ENCODE measurements at regions of chr1 and their contacts with region 1.

Region 1: DNA sequence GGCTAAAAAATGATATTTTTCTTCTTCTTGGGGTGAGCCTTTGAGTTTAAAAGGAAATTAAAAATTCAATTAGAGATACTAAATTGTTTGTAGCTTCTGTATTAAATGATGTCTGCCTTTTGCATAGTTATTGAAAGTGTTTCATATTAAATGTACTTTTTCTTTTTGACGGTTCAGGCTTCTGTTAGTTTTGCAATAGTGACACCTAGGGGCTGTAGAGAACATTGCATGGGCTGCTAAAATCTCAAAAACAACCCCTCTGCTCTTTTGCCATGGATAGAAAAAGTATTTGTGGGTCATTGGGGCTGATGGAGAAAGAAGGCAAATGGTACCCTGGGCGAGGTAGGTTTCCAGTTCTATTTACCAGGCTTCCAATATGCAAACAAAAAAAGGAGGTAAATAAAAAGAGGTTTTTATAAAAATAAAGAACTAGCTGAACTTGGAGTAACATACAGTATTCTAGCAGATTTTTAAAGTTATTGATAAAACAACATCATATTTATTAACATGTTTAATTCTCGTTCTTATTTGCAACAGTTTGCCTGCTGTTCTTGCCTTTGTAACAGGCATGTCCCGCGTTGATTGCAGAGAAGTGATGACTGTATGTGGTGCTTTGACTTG is 115.4 kb upstream of the HOOK1 start:
- DNase-seq: peak; percentile 67
- ATAC-seq: peak; percentile 44
- H3K4me3 ChIP-seq: no peak overlapping the region
- H3K4me3 Mint-ChIP-seq: no peak overlapping the region
- H3K27ac ChIP-seq: no peak overlapping the region
- H3K27ac Mint-ChIP-seq: no peak overlapping the region
- H3K4me1 ChIP-seq: peaks cover 24 to 29% of the 10 kb centered on the region in 2 donors
- H3K4me1 Mint-ChIP-seq: peaks cover 26% of the 10 kb centered on the region
- H3K27me3 ChIP-seq: no peaks in the 10 kb centered on the region
- H3K27me3 Mint-ChIP-seq: no peaks in the 10 kb centered on the region
- CTCF ChIP-seq: peak; percentile 97

Region 2: DNA sequence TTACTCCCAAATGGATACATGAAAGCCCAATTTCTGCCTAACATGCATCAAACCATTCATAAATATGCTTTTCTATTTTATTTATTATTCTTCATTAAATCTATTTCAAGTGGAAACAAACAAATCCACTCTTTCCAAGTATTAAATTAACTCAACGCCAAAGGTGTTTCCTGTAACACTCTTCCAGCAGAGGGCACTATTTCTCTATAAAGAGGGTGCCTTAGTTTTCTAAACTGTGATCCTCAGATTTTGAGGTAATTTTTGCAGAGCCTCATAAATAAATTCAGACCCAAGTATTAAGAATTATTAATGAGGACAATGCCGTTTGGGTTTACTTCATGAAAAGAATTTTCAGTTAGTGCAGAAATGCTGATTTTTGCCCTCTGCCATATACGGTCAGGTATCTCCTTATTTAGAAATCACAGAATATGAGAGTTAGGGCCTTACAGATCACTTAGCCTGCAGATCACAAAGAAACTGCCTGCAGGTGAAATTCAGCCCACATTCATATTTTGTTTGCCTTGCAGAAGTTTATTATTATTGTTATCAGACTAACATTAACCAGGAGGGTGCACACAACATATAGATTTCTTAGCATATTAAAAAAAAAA is 959.4 kb before region 1 on chr1:
- CTCF ChIA-PET with region 1: interaction called, 188 read pairs
- POLR2A ChIA-PET with region 1: interaction called, 3 read pairs
- intact Hi-C with region 1: loop called (anchors 1 kb)
- DNase-seq: peak; percentile 75
- ATAC-seq: peak; percentile 61
- H3K4me3 ChIP-seq: no peak overlapping the region
- H3K4me3 Mint-ChIP-seq: no peak overlapping the region
- H3K27ac ChIP-seq: no peak overlapping the region
- H3K27ac Mint-ChIP-seq: no peak overlapping the region
- H3K4me1 ChIP-seq: no peaks in the 10 kb centered on the region
- H3K4me1 Mint-ChIP-seq: no peaks in the 10 kb centered on the region
- H3K27me3 ChIP-seq: no peaks in the 10 kb centered on the region
- H3K27me3 Mint-ChIP-seq: peaks cover 12% of the 10 kb centered on the region
- CTCF ChIP-seq: peak; percentile 98

Region 3: GRCh38 chr1:58903514-58904298 is 795.6 kb before region 1 on chr1:
- CTCF ChIA-PET with region 1: interaction called, 3 read pairs
- POLR2A ChIA-PET with region 1: no interaction called
- intact Hi-C with region 1: loop called (anchors 5 kb)
- DNase-seq: peak; percentile 77
- ATAC-seq: peak; percentile 88
- H3K4me3 ChIP-seq: peak overlapping the region; percentile 45 to 74 (median 60)
- H3K4me3 Mint-ChIP-seq: peak overlapping the region; percentile 85
- H3K27ac ChIP-seq: peak overlapping the region; percentile 49 to 82
- H3K27ac Mint-ChIP-seq: peak overlapping the region; percentile 86
- H3K4me1 ChIP-seq: peaks cover 10% of the 10 kb centered on the region in 2 donors
- H3K4me1 Mint-ChIP-seq: peaks cover 13% of the 10 kb centered on the region
- H3K27me3 ChIP-seq: no peaks in the 10 kb centered on the region
- H3K27me3 Mint-ChIP-seq: no peaks in the 10 kb centered on the region
- CTCF ChIP-seq: no peak

Region 4: GRCh38 chr1:59076612-59077011 is 622.7 kb before region 1 on chr1:
- CTCF ChIA-PET with region 1: interaction called, 11 read pairs
- POLR2A ChIA-PET with region 1: no interaction called
- intact Hi-C with region 1: loop called (anchors 10 kb)
- DNase-seq: no peak
- ATAC-seq: peak; percentile 21
- H3K4me3 ChIP-seq: no peak overlapping the region
- H3K4me3 Mint-ChIP-seq: no peak overlapping the region
- H3K27ac ChIP-seq: no peak overlapping the region
- H3K27ac Mint-ChIP-seq: no peak overlapping the region
- H3K4me1 ChIP-seq: peaks cover 12 to 16% of the 10 kb centered on the region in 2 donors
- H3K4me1 Mint-ChIP-seq: peaks cover 23% of the 10 kb centered on the region
- H3K27me3 ChIP-seq: no peaks in the 10 kb centered on the region
- H3K27me3 Mint-ChIP-seq: no peaks in the 10 kb centered on the region
- CTCF ChIP-seq: no peak

Region 5: DNA sequence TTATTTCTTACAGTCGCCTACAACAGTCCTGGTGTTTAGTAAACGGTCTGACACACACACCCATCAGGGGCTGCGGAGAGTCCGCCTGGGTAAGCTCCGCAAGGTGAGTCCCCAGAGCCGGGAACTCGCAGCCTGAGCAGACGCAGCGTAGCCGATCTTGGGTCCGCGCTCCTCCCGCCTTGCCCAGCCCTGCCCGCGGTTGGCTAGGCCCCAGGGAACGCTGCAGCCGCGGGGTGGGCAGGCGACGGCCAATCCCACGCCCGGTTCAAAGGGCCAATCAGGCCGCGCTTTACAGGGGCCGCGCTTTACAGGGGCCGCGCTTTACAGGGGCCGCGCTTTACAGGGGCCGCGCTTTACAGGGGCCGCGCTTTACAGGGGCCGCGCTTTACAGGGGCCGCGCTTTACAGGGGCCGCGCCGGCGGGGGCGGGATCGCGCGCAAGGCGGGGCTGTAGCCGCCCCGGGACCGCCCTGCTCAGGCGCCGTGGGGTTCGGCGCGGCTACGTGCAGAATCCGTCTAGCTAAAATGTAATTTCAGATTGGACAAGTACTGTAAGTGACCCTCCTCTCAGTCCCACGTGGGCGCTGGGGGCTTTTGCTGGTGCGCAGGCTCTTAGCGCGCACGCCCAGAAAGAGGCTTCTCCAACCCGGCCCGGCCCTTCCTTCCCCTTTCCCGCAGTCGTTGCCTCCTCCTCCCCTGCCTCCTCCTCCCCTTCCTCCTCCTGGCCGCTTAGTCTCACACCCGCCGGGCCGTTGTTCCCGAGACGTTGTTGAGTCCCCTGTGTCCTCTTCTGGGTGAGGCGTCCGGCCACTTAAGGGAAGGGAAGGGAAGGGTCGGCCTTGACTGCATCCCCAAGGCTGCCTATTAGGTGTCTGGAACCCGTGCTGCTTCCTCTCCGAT is 402.7 kb before region 1 on chr1 and contains the start of gene FGGY:
- CTCF ChIA-PET with region 1: interaction called, 21 read pairs
- POLR2A ChIA-PET with region 1: no interaction called
- intact Hi-C with region 1: loop called (anchors 2 kb)
- DNase-seq: peak; percentile 97
- ATAC-seq: peak; percentile 89
- H3K4me3 ChIP-seq: peak within 1 kb of the TSS; percentile 63 to 92 (median 87)
- H3K4me3 Mint-ChIP-seq: peak within 1 kb of the TSS; percentile 91
- H3K27ac ChIP-seq: peak within 1 kb of the TSS; percentile 96 to 98
- H3K27ac Mint-ChIP-seq: peak within 1 kb of the TSS; percentile 98
- H3K4me1 ChIP-seq: peaks cover 22 to 25% of the 10 kb centered on the region in 2 donors
- H3K4me1 Mint-ChIP-seq: peaks cover 44% of the 10 kb centered on the region
- H3K27me3 ChIP-seq: no peaks in the 10 kb centered on the region
- H3K27me3 Mint-ChIP-seq: no peaks in the 10 kb centered on the region
- CTCF ChIP-seq: no peak
- total RNA-seq, gene FGGY: 34.0 and 38.5 TPM in 2 replicates

Region 6: DNA sequence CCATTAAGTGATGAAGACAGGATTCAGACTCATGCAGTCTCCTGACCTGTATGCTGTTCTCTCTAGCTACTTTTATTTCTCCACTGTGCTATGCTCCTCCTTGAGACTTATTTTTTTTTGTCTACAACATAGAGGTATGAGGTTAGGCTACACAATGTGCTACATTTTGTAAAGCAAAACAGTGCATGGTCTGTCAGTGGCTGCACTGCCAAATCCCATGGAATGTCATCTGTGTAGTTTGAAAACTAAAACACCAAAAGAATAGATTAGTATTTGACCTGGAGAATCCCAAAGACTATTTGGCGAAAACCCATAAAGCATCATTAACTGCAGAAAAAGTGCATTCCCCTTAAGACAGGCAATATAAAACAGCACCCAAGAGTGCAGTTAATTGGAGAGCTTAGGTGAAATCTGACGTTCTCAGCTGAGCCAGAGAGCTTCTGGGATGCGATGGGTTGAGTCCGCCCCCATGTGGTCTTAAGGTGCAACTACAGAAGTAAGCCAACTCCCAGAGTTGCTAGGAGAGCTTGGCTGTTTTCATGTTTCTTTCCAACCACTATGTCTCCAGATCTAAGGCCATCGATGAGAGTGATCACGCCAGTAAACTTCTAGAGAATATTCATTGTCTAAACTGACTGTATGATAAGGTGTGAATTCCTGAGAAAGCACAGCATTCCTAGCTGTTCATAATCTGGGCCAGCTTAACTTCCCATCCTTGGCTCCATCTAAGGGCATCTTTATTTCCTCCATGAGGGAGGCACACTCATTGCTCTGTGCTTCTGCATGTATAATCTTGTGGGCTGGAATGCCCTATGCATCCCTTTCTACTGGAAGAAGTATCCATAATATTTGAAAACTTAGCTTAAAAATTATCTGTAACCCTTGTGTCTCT is 248.0 kb after region 1 on chr1:
- CTCF ChIA-PET with region 1: interaction called, 4 read pairs
- POLR2A ChIA-PET with region 1: no interaction called
- intact Hi-C with region 1: loop called (anchors 5 kb)
- DNase-seq: peak; percentile 61
- ATAC-seq: peak; percentile 75
- H3K4me3 ChIP-seq: no peak overlapping the region
- H3K4me3 Mint-ChIP-seq: no peak overlapping the region
- H3K27ac ChIP-seq: no peak overlapping the region
- H3K27ac Mint-ChIP-seq: no peak overlapping the region
- H3K4me1 ChIP-seq: no peaks in the 10 kb centered on the region
- H3K4me1 Mint-ChIP-seq: no peaks in the 10 kb centered on the region
- H3K27me3 ChIP-seq: peaks cover 0 to 5% (median 2%) of the 10 kb centered on the region in 4 experiments
- H3K27me3 Mint-ChIP-seq: peaks cover 10% of the 10 kb centered on the region
- CTCF ChIP-seq: peak; percentile 93